ENCODE measurements at regions of chr15 and their contacts with region 1.

Region 1: DNA sequence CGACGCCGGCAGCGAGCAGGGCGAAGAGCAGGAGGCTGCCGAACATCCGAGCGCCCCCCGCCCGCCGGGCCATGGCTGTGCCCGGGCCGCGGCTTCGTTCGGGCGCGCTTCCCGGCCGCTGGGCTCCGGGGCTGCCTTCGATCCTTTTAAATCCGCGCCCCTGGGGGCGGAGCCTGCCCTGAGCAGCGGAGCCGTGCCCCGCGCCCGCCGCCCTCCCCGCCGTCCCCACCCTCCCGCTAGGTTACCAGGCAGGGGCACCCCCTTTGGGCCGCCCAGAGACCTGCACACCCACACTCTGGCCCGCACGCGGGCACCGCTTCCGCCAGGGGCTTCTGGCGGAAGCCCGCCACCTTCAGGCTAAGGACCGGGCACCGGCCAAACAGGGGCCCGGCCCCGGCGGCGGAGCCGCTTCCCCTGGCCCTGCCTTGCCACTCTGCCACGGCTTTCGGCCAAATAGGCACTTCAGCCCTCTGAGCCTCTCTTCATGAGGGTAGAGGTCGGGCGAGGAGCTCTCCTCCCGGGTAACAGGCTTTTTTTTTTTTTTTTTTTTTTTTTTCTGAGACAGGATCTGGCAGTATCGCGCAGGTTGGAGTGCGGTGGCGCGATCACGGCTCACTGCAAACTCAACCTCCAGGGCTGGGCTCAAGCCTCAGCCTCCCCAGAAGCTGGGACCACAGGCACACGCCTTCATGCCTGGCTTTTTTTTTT is at the start of gene NMB:
- DNase-seq: peak; percentile 77 to 81
- H3K4me3 ChIP-seq: peak within 1 kb of the TSS; percentile 35 to 60
- H3K27ac ChIP-seq: peak within 1 kb of the TSS; percentile 82 to 92
- H3K4me1 ChIP-seq: peaks cover 0 to 13% of the 10 kb centered on the region in 2 donors
- H3K27me3 ChIP-seq: no peaks in the 10 kb centered on the region
- CTCF ChIP-seq: peak; percentile 72 to 80 (median 78)
- POLR2A ChIP-seq: peak in 1 of 2 donors; percentile 52
- total RNA-seq, gene NMB: 3.1 to 10.5 (median 7.4) TPM

Region 2: DNA sequence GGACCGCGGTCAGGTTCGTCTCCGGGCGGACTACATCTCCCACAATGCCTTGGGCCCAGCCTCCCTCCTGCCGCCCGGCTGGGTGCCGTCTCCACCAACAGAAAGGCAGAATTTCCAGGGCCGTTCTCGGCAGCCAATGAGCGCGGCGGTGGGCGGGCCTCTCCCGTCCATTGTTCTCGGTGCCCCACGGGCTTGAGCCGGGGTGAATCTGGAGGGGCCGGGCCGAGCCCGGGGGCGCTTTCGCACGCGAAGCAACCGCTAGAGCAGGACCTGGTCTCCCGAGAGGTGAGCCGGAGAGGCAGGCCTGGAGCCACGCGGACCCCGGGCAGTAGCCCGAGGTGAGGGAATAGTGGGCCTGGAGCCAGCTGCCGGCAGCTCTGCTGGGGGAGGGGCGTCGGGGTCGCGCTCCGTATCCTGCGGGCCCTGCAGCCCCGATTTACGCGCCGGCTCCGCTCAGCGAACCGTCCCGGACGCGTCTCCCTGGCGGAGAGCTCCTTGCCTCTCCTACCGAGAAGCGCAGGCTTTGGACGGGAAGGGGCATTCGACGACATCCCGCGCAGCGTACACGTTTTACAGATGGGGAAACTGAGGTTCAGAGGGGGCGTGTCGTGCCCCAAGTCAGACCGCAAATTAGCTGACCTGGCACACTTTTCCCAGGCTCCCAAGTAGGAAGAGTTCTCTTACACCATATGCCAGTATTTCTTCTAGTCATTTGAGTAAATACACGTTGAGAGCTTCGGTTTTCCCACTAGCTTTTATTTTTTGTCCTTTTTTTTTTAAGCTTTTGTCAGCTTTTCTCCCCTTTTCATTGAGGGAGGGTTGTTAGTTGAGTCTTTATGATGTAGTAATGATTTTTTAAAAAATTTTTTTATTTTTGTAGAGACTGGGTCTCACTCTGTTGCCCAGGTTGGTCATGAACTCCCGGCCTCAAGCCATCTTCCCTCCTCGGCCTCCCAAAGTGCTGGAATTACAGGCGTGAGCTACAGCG is 57.1 kb before region 1 on chr15 and contains the start of gene ZSCAN2:
- intact Hi-C with region 1: loop called (anchors 10 kb)
- DNase-seq: peak; percentile 94
- H3K4me3 ChIP-seq: peak within 1 kb of the TSS; percentile 75 to 94
- H3K27ac ChIP-seq: peak within 1 kb of the TSS; percentile 69 to 70
- H3K4me1 ChIP-seq: no peaks in the 10 kb centered on the region
- H3K27me3 ChIP-seq: no peaks in the 10 kb centered on the region
- CTCF ChIP-seq: no peak
- POLR2A ChIP-seq: peak in 1 of 2 donors; percentile 53
- total RNA-seq, gene ZSCAN2: 0.59 to 30.0 (median 5.3) TPM

Region 3: GRCh38 chr15:84748274-84749110 is 90.3 kb after region 1 on chr15 and contains the start of gene ZNF592:
- intact Hi-C with region 1: no loop called
- DNase-seq: peak; percentile 77 to 90
- H3K4me3 ChIP-seq: peak within 1 kb of the TSS; percentile 73 to 88
- H3K27ac ChIP-seq: peak within 1 kb of the TSS; percentile 99 to 100
- H3K4me1 ChIP-seq: peaks cover 0 to 15% of the 10 kb centered on the region in 2 donors
- H3K27me3 ChIP-seq: no peaks in the 10 kb centered on the region
- CTCF ChIP-seq: peak in 3 of 4 experiments; percentile 47 to 84 (median 53)
- POLR2A ChIP-seq: peak; percentile 49 to 77
- total RNA-seq, gene ZNF592: 4.7 to 48.2 (median 11.7) TPM

Region 4: GRCh38 chr15:84929744-84930371 is 271.6 kb after region 1 on chr15:
- intact Hi-C with region 1: loop called (anchors 10 kb)
- DNase-seq: no peak
- H3K4me3 ChIP-seq: no peak overlapping the region
- H3K27ac ChIP-seq: no peak overlapping the region
- H3K4me1 ChIP-seq: no peaks in the 10 kb centered on the region
- H3K27me3 ChIP-seq: no peaks in the 10 kb centered on the region
- CTCF ChIP-seq: no peak
- POLR2A ChIP-seq: no peak